AG04449 (cell line): ENCODE measurements at regions of chr2 and their contacts with region 1.

Region 1: DNA sequence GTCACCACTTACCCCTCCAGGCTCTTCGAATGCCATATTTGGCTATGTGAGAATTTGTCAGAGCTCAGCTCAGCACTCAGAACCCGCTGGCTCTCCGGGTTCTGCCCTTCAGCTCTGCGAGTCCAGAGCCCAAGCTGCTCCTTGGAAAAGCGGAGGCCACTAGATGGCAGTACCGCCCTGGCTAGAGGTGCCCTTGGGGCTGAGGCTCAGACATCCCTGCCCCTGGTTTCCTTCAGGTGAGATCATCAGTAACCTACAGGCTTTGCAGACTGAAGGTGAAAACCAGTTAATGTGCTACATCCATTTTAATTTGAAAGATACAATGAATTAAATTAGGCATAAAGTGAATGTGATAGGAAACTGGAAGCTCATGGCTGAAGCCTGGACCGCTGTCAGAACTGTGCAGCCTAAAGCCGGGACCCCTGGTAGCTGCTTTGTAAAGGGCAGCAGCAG is 285.6 kb downstream of the AGAP1 start:
- DNase-seq: no peak
- H3K4me3 ChIP-seq: no peak overlapping the region
- CTCF ChIP-seq: peak; percentile 92

Region 2: GRCh38 chr2:235421618-235422017 is 357.9 kb before region 1 on chr2:
- CTCF ChIA-PET with region 1: no interaction called
- POLR2A ChIA-PET with region 1: no interaction called
- DNase-seq: no peak
- H3K4me3 ChIP-seq: no peak overlapping the region
- CTCF ChIP-seq: no peak

Region 3: DNA sequence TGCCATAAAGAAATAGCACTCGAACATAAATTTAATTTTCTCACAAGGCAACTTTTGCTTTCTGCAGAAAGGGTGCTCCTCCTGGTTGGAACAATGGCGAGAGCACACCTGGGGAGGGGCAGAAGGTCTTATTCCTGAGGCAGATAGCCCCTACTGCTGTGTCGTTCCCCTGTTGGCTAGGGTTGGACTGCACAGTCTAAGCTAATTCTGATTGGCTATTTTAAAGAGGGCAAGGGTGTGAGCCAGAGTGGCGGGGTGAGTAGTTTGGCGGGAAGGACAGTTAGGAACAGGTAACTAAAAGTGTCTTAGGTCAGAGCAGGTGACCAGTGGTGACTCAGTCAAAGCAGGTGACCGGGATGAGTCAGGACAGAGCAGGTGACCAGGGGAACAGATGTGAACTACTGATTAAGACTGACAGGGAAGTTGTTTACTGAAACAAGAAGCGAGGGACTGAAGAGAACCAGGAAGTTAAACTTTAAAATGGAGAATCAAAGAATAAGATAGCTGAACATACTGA is 335.3 kb before region 1 on chr2:
- CTCF ChIA-PET with region 1: no interaction called
- POLR2A ChIA-PET with region 1: no interaction called
- DNase-seq: no peak
- H3K4me3 ChIP-seq: no peak overlapping the region
- CTCF ChIP-seq: no peak

Region 4: GRCh38 chr2:235659767-235660322 is 119.6 kb before region 1 on chr2:
- CTCF ChIA-PET with region 1: no interaction called
- POLR2A ChIA-PET with region 1: no interaction called
- DNase-seq: peak; percentile 63
- H3K4me3 ChIP-seq: no peak overlapping the region
- CTCF ChIP-seq: no peak

Region 5: DNA sequence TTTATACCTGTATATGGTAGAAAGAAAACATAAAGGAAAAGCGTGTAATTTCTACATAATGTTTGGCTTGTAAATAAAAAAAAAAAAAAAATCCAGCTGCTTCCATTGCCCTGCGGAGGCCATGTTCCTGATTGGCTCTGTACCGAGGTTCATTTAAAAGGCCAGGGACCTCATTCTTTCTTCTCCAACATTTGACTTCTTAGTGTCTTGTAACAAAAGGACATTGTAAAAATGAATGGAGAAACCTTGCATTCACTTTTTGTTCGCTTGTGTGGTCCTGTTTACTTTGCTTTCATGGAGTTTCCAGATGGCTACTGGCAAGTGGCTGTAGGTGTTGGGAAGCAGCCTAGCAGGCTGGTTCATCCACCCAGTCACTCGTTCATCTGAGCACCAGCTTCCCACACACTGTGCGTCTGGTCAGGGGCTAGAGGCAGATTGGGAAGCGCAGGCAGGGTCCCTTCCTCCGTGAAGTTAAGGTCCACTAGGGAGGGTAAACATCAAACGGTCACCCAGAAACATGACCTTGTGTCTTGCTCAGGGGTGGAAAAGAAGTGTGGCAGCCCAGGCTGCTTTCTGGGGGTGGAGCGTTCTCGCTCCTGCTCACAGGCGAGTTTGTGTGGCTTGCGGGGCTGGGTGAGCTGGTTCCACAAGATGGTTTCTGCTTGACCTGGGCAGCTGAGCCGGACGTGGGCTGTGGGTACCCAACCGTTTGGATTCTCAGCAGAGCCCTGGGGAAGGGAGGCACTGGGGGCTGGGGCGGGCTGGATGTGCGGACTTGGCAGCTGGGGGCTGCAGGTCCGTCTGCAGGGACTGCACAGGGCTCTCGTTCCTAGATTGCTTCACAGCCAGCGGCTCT is 24.9 kb before region 1 on chr2:
- CTCF ChIA-PET with region 1: interaction called, 18 read pairs
- POLR2A ChIA-PET with region 1: no interaction called
- DNase-seq: no peak
- H3K4me3 ChIP-seq: no peak overlapping the region
- CTCF ChIP-seq: no peak

Region 6: DNA sequence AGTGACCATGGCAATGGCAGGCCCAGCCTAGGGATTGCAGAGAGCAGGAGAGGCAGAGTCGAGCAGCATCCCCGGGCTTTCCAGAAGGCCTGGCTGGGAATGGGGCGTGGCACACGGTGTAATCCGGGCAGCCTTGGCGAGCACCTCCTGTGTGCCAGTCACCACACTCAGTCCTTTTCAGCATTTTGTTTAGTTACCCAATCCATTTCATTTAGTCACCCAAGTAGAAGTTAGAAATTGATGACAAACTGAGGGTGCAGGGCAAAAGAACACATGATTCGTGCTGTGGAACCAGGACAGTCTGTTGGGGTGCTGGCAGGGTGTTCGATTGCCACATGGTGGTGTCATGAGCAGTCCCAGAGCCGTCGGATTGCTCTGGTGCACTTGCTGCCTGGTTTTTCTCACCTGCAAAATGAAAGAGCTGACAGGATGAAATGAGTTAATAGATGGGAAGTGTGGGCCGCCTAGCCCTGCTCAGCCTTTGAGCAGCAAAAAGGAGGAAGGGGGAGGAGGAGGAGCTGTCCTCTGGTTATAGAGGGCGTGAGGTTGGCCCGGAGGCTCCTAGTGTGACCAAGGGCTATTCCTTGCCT is 13.8 kb after region 1 on chr2:
- CTCF ChIA-PET with region 1: interaction called, 92 read pairs
- POLR2A ChIA-PET with region 1: no interaction called
- DNase-seq: no peak
- H3K4me3 ChIP-seq: no peak overlapping the region
- CTCF ChIP-seq: peak; percentile 44

Region 7: DNA sequence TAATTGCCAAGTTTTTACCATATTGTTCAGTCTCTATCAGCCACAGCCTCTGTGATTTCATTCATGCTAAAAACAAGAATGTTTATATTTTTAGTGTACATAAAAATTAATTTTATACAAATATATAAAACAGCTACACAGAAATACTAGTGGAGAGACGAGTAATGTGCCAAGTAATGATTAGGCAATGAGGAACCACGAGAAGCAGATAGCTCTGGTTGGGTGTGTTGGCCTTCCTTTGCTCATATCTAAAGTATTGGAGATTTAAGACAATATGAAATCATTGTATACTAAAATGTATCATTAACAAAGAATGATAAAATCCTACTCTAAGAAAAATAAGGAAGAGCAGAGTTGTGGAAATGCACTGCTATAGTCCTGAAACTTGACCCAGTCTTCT is 41.1 kb after region 1 on chr2:
- CTCF ChIA-PET with region 1: interaction called, 12 read pairs
- POLR2A ChIA-PET with region 1: no interaction called
- DNase-seq: no peak
- H3K4me3 ChIP-seq: no peak overlapping the region
- CTCF ChIP-seq: no peak

Region 8: DNA sequence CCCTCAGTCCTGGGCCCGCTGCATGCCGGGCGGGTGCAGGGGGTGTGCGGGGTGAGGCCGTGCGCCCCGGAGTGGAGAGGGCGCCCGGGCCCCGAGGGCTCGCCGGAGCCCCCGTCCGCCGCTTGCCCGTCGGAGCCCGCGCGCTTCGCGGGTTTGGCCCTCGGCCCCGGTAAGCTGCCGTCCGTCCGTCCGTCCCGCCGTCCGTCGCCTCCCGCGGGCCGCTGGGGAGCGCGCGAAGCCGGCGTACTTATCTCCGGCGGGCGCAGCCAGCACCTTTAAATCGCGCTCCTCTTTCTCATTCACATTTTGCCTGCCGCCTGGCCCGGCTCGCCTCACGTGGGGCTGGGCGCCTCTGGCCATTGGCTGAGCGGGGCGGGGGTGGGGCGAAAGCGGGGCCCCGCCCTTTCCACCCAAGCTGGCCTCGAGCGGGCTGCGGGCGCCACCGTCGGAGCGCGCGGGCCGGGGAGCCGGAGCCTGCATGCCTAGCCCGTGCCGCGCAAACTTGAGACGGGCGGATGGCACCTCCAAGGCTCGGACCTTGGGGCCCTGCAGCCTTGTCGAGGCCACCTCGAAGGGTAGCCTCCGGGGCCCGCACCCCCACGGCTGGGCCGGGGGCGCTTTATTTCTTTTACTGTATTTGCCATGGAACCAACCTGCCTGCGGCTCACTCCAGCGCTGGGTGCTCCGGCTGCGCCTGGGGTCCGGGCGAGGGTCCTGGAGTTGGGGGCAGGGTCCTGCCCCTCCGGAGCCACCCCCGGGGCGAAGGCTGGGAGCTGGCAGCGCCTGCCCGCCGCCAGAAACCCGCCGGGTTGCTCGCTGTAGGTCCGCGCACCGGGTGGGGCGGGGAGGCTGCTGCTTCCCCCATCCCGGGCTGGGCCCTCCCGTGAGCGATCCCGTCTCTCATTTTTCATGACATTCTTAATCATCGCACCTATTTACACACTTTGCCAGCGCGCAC is 388.9 kb after region 1 on chr2 and contains the start of gene GBX2:
- CTCF ChIA-PET with region 1: interaction called, 22 read pairs
- POLR2A ChIA-PET with region 1: no interaction called
- DNase-seq: no peak
- H3K4me3 ChIP-seq: peak within 1 kb of the TSS; percentile 49
- CTCF ChIP-seq: no peak